Astrocyte of the cerebellum (primary cell): ENCODE measurements at regions of chr6 and their contacts with region 1.

Region 1: DNA sequence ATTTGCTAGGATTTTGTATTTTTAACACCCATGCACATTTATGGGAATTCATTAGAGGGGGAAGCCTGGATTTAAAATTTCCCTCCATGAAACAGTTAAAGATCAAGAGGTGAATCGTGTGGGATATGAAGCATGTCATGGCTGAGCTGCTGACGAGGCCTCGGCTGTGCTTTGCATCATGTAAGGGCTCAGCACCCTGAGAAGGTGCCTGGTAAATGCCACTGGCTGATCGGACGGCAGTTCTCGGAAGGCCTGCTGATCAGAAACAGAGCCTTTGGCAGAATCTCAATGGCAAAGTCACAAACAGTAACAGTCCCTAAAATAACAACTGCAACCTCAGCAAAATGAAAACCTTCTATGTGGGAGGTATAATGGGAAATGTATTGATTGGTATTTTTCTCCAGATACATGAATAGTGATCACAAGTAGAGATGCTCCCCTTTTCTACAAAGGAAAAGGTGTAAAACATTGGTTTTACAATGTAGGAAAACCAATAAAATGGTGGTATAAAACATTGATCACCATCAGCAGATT is 53.0 kb upstream of the FUCA2 start:
- DNase-seq: no peak
- H3K4me3 ChIP-seq: no peak overlapping the region
- CTCF ChIP-seq: no peak

Region 2: DNA sequence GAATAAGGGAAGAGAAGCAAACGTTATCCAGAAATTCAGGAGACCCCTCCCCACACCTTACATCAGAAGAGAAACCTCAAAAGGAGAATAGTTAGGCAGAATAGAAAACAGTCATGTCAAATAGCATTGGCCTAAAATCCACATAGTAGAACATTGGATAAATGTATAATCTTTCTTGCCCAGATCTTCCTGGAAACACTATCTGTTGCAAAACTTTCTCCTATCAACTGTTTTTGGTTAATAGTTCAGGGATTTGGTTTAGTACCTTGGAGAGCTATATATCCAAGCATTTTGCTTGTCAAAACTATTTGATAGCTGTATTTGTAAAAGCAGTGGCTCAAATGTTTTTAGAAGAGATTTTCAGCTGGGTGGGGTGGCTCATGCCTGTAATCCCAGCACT is 38.9 kb after region 1 on chr6:
- in situ Hi-C with region 1: loop called (anchors 5 kb)
- DNase-seq: no peak
- H3K4me3 ChIP-seq: no peak overlapping the region
- CTCF ChIP-seq: no peak

Region 3: GRCh38 chr6:143652841-143653331 is 88.3 kb after region 1 on chr6:
- in situ Hi-C with region 1: no loop called
- DNase-seq: no peak
- H3K4me3 ChIP-seq: no peak overlapping the region
- CTCF ChIP-seq: no peak